ENCODE measurements at regions of chr11 and their contacts with region 1.

Region 1: DNA sequence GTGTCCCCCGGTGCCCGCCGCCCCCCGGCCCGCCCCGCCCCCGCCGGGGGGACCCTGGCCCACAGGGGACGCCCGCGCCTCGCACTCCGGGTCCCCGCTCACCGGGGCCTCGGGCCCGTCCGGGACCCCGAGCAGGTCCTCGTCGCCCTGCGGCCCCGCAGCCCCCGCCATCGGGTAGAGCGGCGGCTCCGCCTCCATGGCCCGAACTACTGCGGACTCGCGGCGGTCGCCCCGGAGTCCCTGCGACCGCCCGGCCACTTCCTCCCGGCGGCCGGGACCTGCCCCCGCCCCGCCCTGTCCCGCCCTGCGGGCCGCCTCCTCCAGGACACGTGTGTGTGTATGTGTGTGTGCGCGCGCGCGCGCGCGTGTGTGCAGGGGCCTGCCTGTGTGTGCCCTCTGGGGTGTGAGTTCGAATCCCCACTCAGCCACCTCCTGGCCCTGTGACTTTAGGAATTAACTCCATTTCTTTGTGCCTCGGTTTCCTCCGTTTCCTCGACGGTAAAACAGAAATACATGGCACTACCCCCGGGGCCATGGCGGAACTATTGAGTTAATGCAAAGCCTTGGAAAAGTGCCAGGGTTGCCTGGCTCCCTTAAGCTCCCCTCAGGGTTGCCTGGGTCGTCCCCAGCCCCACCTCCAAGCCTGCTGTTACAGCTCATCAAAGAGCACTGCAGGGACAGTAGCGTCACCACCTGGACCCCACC is at the start of gene UNC93B1:
- DNase-seq: peak; percentile 90 to 96 (median 93)
- ATAC-seq: peak; percentile 82 to 96 (median 90)
- H3K4me3 ChIP-seq: peak within 1 kb of the TSS; percentile 57 to 86 (median 70)
- H3K27ac ChIP-seq: peak within 1 kb of the TSS in 11 of 12 donors; percentile 53 to 94 (median 72)
- H3K4me1 ChIP-seq: peaks cover 0 to 37% (median 9%) of the 10 kb centered on the region in 12 donors
- H3K27me3 ChIP-seq: no peaks in the 10 kb centered on the region
- CTCF ChIP-seq: no peak
- POLR2A ChIP-seq: peak in 1 of 2 donors; percentile 61
- total RNA-seq, gene UNC93B1: 5.2 to 34.2 (median 7.9) TPM

Region 2: GRCh38 chr11:68038718-68039525 is 34.9 kb after region 1 on chr11 and contains the start of gene TCIRG1:
- intact Hi-C with region 1: loop called in 1 of 10 experiments (anchors 5 kb)
- DNase-seq: peak; percentile 88 to 94 (median 91)
- ATAC-seq: peak; percentile 67 to 88 (median 82)
- H3K4me3 ChIP-seq: peak within 1 kb of the TSS; percentile 52 to 95 (median 81)
- H3K27ac ChIP-seq: peak within 1 kb of the TSS; percentile 74 to 96 (median 90)
- H3K4me1 ChIP-seq: peaks cover 11 to 58% (median 41%) of the 10 kb centered on the region in 12 donors
- H3K27me3 ChIP-seq: no peaks in the 10 kb centered on the region
- CTCF ChIP-seq: no peak
- POLR2A ChIP-seq: peak; percentile 73 to 98
- total RNA-seq, gene TCIRG1: 10.2 to 88.7 (median 20.3) TPM

Region 3: GRCh38 chr11:68121067-68121899 is 117.3 kb after region 1 on chr11 and contains the start of gene CHKA:
- intact Hi-C with region 1: no loop called
- DNase-seq: peak; percentile 94 to 97 (median 95)
- ATAC-seq: peak; percentile 85 to 97 (median 95)
- H3K4me3 ChIP-seq: peak within 1 kb of the TSS; percentile 38 to 87 (median 76)
- H3K27ac ChIP-seq: peak within 1 kb of the TSS; percentile 91 to 100 (median 99)
- H3K4me1 ChIP-seq: peaks cover 0 to 54% (median 39%) of the 10 kb centered on the region in 12 donors
- H3K27me3 ChIP-seq: no peaks in the 10 kb centered on the region
- CTCF ChIP-seq: peak in 2 of 12 donors; percentile 15 to 24
- POLR2A ChIP-seq: peak; percentile 65 to 83
- total RNA-seq, gene CHKA: 6.1 to 15.0 (median 8.2) TPM